ENCODE measurements at regions of chr9 and their contacts with region 1.

Region 1: GRCh38 chr9:114869845-114870244 is 60.5 kb downstream of the TNFSF8 start:
- DNase-seq: no peak
- H3K4me3 ChIP-seq: no peak overlapping the region
- H3K27ac ChIP-seq: no peak overlapping the region
- H3K4me1 ChIP-seq: no peaks in the 10 kb centered on the region
- H3K27me3 ChIP-seq: no peaks in the 10 kb centered on the region
- CTCF ChIP-seq: no peak
- POLR2A ChIP-seq: no peak

Region 2: GRCh38 chr9:114811301-114811700 is 58.5 kb before region 1 on chr9:
- intact Hi-C with region 1: loop called (anchors 10 kb)
- DNase-seq: no peak
- H3K4me3 ChIP-seq: no peak overlapping the region
- H3K27ac ChIP-seq: no peak overlapping the region
- H3K4me1 ChIP-seq: peaks cover 4 to 5% of the 10 kb centered on the region in 2 donors
- H3K27me3 ChIP-seq: no peaks in the 10 kb centered on the region
- CTCF ChIP-seq: no peak
- POLR2A ChIP-seq: no peak

Region 3: GRCh38 chr9:114930056-114930812 is 60.4 kb after region 1 on chr9 and contains the start of gene TNFSF8:
- intact Hi-C with region 1: no loop called
- DNase-seq: no peak
- H3K4me3 ChIP-seq: no peak within 1 kb of the TSS
- H3K27ac ChIP-seq: no peak within 1 kb of the TSS
- H3K4me1 ChIP-seq: peaks cover 14% of the 10 kb centered on the region in 2 donors
- H3K27me3 ChIP-seq: no peaks in the 10 kb centered on the region
- CTCF ChIP-seq: no peak
- POLR2A ChIP-seq: no peak
- total RNA-seq, gene TNFSF8: 1.3 to 4.2 (median 2.1) TPM